ENCODE measurements at regions of chr14 and their contacts with region 1.

Region 1: DNA sequence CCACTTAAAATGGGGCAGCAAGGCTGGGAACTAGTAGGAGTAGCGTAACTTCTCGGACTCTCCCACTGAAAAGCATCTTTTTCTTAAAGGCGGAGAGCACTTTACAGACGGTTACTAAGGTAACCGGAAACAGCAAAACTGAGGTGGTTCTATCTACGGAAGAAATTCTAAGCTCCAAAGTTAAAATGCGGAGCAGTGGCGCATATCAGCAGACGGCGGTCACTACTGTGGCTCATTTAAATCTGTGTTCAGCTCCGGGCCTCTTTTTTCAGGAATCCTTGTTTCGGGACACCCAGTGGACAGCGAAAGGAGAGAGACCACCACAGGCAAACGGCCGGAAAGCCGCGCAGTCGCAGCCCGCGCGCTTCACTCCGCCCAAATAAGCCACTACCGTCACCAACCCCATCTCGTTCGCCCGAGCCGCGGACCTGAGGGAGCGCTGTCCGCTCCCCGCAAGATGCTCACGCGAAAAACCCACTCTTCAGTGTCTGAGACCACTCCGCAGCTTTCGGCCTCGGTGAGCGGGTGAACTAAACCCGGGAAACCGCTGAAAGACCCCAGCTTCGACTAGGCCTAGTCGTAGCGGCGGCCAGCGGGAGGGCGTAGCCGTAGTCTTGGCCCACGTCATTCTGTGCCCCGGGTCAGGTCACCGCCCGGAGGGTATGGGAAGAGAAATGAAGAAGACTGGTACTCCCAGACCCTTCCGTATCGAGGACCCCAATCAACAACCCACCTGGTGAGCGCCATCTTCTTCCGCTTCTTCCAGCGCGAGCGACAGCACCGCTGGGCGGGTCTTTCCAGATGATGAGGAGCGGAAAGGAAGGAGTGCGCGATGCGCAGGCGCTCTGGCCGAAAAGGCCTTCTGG is at the start of gene SNW1:
- DNase-seq: peak; percentile 95
- H3K4me3 Mint-ChIP-seq: peak within 1 kb of the TSS; percentile 94
- H3K27ac Mint-ChIP-seq: peak within 1 kb of the TSS; percentile 95
- H3K4me1 Mint-ChIP-seq: peaks cover 32% of the 10 kb centered on the region
- H3K27me3 Mint-ChIP-seq: no peaks in the 10 kb centered on the region
- total RNA-seq, gene SNW1: 117 to 129 TPM

Region 2: GRCh38 chr14:77598366-77599070 is 162.1 kb before region 1 on chr14:
- CTCF ChIA-PET with region 1: no interaction called
- intact Hi-C with region 1: loop called (anchors 5 kb)
- DNase-seq: peak; percentile 38
- H3K4me3 Mint-ChIP-seq: peak overlapping the region; percentile 51
- H3K27ac Mint-ChIP-seq: peak overlapping the region; percentile 78
- H3K4me1 Mint-ChIP-seq: peaks cover 42% of the 10 kb centered on the region
- H3K27me3 Mint-ChIP-seq: no peaks in the 10 kb centered on the region

Region 3: DNA sequence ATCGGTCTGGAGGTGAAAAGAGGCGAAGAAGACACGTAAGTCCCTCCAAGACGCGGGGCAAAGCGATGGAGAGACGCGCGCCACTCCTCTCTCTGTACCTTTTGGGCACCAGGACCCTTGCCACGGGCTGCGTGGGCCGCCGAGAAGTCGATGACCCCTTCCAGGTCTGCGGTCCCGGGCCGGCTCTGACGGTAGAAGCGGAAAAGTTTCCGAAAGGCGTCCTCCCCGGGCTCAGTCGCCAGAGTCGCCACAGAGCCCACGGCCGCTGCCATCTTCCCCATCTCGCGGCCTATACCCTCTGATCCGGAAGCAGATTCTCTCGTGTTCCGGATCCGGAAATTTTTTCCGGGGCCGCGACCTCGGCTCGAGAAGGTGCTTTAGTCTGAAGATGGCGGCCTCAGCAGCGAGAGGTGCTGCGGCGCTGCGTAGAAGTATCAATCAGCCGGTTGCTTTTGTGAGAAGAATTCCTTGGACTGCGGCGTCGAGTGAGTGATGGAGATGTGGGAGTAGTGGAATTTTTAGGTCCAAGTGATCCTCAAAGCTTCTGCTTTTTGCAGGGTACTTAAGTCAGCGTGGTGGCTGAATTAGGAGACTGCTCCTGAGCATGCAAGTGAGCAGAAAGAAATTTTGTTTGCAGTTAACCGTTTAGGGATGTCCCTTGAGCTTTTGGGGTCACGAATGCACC is 52.7 kb before region 1 on chr14 and contains the starts of genes ALKBH1 and SLIRP:
- CTCF ChIA-PET with region 1: no interaction called
- intact Hi-C with region 1: loop called (anchors 1 kb)
- DNase-seq: peak; percentile 92
- H3K4me3 Mint-ChIP-seq: peak within 1 kb of the TSS; percentile 87
- H3K27ac Mint-ChIP-seq: peak within 1 kb of the TSS; percentile 88
- H3K4me1 Mint-ChIP-seq: peaks cover 48% of the 10 kb centered on the region
- H3K27me3 Mint-ChIP-seq: no peaks in the 10 kb centered on the region
- total RNA-seq, gene ALKBH1: 13.5 to 14.5 TPM
- total RNA-seq, gene SLIRP: 134 to 149 TPM

Region 4: GRCh38 chr14:77782202-77782601 is 21.6 kb after region 1 on chr14:
- CTCF ChIA-PET with region 1: no interaction called
- intact Hi-C with region 1: no loop called
- DNase-seq: no peak
- H3K4me3 Mint-ChIP-seq: no peak overlapping the region
- H3K27ac Mint-ChIP-seq: no peak overlapping the region
- H3K4me1 Mint-ChIP-seq: no peaks in the 10 kb centered on the region
- H3K27me3 Mint-ChIP-seq: no peaks in the 10 kb centered on the region